ENCODE measurements at regions of chr1 and their contacts with region 1.

Region 1: GRCh38 chr1:17624611-17625233 is 85.2 kb downstream of the ARHGEF10L start:
- ATAC-seq: peak in 3 of 8 experiments; percentile 3 to 77 (median 30)
- H3K4me3 ChIP-seq: no peak overlapping the region
- H3K27ac ChIP-seq: no peak overlapping the region
- H3K4me1 ChIP-seq: no peaks in the 10 kb centered on the region

Region 2: GRCh38 chr1:18091660-18092446 is 467.1 kb after region 1 on chr1:
- in situ Hi-C with region 1: loop called in 1 of 9 experiments (anchors 25 kb)
- ATAC-seq: peak; percentile 33 to 78 (median 51)
- H3K4me3 ChIP-seq: no peak overlapping the region
- H3K27ac ChIP-seq: no peak overlapping the region
- H3K4me1 ChIP-seq: peaks cover 0 to 14% of the 10 kb centered on the region in 2 donors

Region 3: DNA sequence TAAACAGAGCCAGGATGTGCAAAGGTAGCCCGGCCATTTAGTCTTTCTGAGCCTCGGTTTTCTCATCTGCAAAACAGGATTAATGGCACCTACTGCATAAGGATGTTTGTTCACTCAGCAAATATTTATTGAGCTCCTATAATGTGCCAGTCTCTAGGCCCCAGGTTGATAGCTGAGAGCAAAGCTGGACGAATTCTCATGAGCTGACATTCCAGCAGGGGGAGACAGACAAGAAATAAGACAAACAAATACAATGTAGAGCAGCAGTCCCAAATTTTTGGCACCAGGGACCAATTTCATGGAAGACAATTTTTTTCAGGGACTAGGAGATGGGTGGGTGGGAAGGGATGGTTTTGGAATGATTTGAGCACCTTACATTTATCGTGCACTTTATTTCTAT is 931.6 kb after region 1 on chr1:
- in situ Hi-C with region 1: loop called in 1 of 9 experiments (anchors 25 kb)
- ATAC-seq: peak in 2 of 8 experiments; percentile 20 to 66
- H3K4me3 ChIP-seq: no peak overlapping the region
- H3K27ac ChIP-seq: no peak overlapping the region
- H3K4me1 ChIP-seq: peaks cover 10 to 21% of the 10 kb centered on the region in 2 donors

Measured in motor neuron (in vitro differentiated cells).